ENCODE measurements at regions of chr16 and their contacts with region 1.

Region 1: GRCh38 chr16:69741919-69742904 is 12.5 kb downstream of the NOB1 start:
- H3K4me3 ChIP-seq: no peak overlapping the region
- H3K27ac ChIP-seq: peak overlapping the region; percentile 1; the same call in 1 of the 2 replicates
- H3K4me1 ChIP-seq: no peaks in the 10 kb centered on the region
- CTCF ChIP-seq: no peak

Region 2: GRCh38 chr16:69535123-69536050 is 206.8 kb before region 1 on chr16:
- CTCF ChIA-PET with region 1: no interaction called
- POLR2A ChIA-PET with region 1: no interaction called
- H3K4me3 ChIP-seq: no peak overlapping the region
- H3K27ac ChIP-seq: no peak overlapping the region
- H3K4me1 ChIP-seq: no peaks in the 10 kb centered on the region; the same call in 1 of the 2 replicates
- CTCF ChIP-seq: no peak

Region 3: DNA sequence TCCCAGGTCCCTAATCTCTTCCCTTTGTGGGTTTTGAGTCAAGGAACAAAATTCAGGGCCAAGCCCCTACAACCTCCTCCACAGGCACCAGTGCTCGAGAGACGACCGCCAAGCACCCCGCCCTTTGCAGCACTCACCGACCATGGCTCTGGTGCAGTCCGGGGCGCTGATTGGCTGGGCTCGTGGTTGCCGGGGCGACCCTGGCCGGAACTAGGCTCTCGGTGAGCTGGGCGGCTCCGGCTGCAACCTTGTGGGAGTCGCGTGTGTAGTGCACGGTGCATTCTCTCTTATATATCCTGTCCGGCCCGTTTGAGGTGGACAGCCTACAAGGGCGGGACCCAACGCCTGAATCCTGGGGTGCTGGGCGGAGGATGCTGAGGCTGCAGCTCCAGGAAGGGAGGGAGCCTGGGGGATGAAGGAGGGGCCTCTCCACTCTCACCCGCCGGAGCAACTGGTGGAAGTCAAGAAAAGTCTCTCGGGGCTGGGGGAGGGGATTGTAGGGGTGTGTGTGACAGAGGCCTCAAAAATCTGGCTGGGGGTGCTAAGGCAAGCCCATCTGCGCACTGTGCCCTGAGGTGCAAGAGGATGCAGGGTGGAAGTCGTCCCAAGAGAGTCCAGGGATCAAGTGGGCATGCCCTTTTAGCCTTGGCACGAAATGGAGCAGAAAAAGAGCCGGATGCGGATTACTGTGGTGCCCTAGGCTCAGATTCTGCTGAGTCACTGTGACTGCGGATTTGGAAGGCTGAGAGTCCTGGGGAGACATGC is 15.7 kb before region 1 on chr16 and contains the start of gene NQO1:
- CTCF ChIA-PET with region 1: interaction called, 4 read pairs
- POLR2A ChIA-PET with region 1: interaction called, 10 read pairs
- H3K4me3 ChIP-seq: peak within 1 kb of the TSS; percentile 46
- H3K27ac ChIP-seq: peak within 1 kb of the TSS; percentile 13; the same call in 1 of the 2 replicates
- H3K4me1 ChIP-seq: no peaks in the 10 kb centered on the region; the same call in 1 of the 2 replicates
- CTCF ChIP-seq: no peak

Region 4: GRCh38 chr16:69890114-69890891 is 148.1 kb after region 1 on chr16:
- CTCF ChIA-PET with region 1: no interaction called
- POLR2A ChIA-PET with region 1: no interaction called
- H3K4me3 ChIP-seq: no peak overlapping the region
- H3K27ac ChIP-seq: peak overlapping the region; percentile 49
- H3K4me1 ChIP-seq: 0 out of 2 replicates have a peak, but pooled peaks cover 4% of the 10 kb centered on the region
- CTCF ChIP-seq: no peak

Measured in HEK293 (cell line).